ENCODE measurements at regions of chr6 and their contacts with region 1.

Region 1: GRCh38 chr6:108835218-108835850 is 12.9 kb upstream of the ARMC2 start:
- DNase-seq: peak; percentile 75 to 91 (median 82)
- ATAC-seq: peak; percentile 99
- H3K4me3 ChIP-seq: no peak overlapping the region
- H3K4me3 Mint-ChIP-seq: peak overlapping the region; percentile 42
- H3K27ac ChIP-seq: no peak overlapping the region
- H3K27ac Mint-ChIP-seq: no peak overlapping the region
- H3K4me1 ChIP-seq: peaks cover 13% of the 10 kb centered on the region
- H3K4me1 Mint-ChIP-seq: peaks cover 31% of the 10 kb centered on the region
- H3K27me3 ChIP-seq: no peaks in the 10 kb centered on the region
- H3K27me3 Mint-ChIP-seq: no peaks in the 10 kb centered on the region
- CTCF ChIP-seq: peak; percentile 91

Region 2: DNA sequence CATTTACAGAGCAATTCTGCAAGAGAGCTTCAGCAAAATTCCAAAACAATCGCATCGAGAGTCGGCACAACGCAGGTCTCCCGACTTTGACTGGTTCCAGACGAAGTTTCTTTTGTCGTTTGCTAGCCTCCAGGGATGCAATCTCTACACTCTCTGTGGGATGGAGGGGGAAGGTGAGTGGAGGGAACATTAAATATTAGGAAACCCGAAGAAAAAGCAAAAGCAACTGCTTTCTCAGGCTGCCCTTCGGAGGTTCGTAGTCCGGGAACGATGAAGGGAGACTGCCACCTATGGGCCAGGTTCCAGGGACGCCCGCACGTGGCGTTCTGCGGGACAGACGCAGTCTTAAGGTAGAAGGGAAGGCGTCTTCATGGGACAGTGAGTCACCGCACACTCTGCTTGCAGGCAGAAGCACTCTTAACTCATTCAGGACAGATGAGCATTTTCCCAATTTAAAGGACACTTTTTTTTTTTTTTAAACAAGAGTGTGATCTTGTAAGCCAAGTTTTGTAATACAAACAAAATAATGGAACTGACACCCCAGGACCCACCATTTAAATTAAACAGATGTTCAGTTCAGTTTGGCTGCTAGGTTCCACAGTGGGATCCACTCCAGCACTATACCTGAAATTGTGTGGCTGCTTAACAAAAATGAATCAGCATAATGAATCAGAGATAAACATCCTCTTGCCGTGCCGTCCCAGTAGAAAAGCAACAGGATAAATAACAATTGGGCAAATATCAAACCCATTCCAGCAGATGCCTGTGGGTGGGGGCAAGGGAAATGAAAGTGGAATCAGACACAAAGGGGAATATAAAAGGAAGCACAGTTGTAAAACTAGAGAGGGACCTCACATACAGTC is 52.9 kb before region 1 on chr6:
- CTCF ChIA-PET with region 1: no interaction called
- POLR2A ChIA-PET with region 1: no interaction called
- intact Hi-C with region 1: loop called (anchors 2 to 5 kb)
- DNase-seq: peak; percentile 69 to 89 (median 75)
- ATAC-seq: peak; percentile 100
- H3K4me3 ChIP-seq: peak overlapping the region; percentile 45
- H3K4me3 Mint-ChIP-seq: peak overlapping the region; percentile 87
- H3K27ac ChIP-seq: no peak overlapping the region
- H3K27ac Mint-ChIP-seq: no peak overlapping the region
- H3K4me1 ChIP-seq: peaks cover 11% of the 10 kb centered on the region
- H3K4me1 Mint-ChIP-seq: peaks cover 11% of the 10 kb centered on the region
- H3K27me3 ChIP-seq: no peaks in the 10 kb centered on the region
- H3K27me3 Mint-ChIP-seq: no peaks in the 10 kb centered on the region
- CTCF ChIP-seq: peak; percentile 86

Region 3: GRCh38 chr6:109103942-109104341 is 268.6 kb after region 1 on chr6:
- CTCF ChIA-PET with region 1: no interaction called
- POLR2A ChIA-PET with region 1: no interaction called
- intact Hi-C with region 1: no loop called
- DNase-seq: no peak
- ATAC-seq: no peak
- H3K4me3 ChIP-seq: no peak overlapping the region
- H3K4me3 Mint-ChIP-seq: no peak overlapping the region
- H3K27ac ChIP-seq: no peak overlapping the region
- H3K27ac Mint-ChIP-seq: no peak overlapping the region
- H3K4me1 ChIP-seq: no peaks in the 10 kb centered on the region
- H3K4me1 Mint-ChIP-seq: no peaks in the 10 kb centered on the region
- H3K27me3 ChIP-seq: no peaks in the 10 kb centered on the region
- H3K27me3 Mint-ChIP-seq: no peaks in the 10 kb centered on the region
- CTCF ChIP-seq: no peak

Region 4: GRCh38 chr6:109373762-109374161 is 538.4 kb after region 1 on chr6:
- CTCF ChIA-PET with region 1: no interaction called
- POLR2A ChIA-PET with region 1: no interaction called
- intact Hi-C with region 1: loop called in 1 of 2 experiments (anchors 10 kb)
- DNase-seq: peak in 3 of 14 experiments; percentile 21 to 37 (median 36)
- ATAC-seq: peak; percentile 51
- H3K4me3 ChIP-seq: no peak overlapping the region
- H3K4me3 Mint-ChIP-seq: no peak overlapping the region
- H3K27ac ChIP-seq: no peak overlapping the region
- H3K27ac Mint-ChIP-seq: no peak overlapping the region
- H3K4me1 ChIP-seq: peaks cover 29% of the 10 kb centered on the region
- H3K4me1 Mint-ChIP-seq: peaks cover 81% of the 10 kb centered on the region
- H3K27me3 ChIP-seq: no peaks in the 10 kb centered on the region
- H3K27me3 Mint-ChIP-seq: no peaks in the 10 kb centered on the region
- CTCF ChIP-seq: no peak